Naive thymus-derived CD8-positive, alpha-beta T cell (primary cell): ENCODE measurements at regions of chr2 and their contacts with region 1.

Region 1: DNA sequence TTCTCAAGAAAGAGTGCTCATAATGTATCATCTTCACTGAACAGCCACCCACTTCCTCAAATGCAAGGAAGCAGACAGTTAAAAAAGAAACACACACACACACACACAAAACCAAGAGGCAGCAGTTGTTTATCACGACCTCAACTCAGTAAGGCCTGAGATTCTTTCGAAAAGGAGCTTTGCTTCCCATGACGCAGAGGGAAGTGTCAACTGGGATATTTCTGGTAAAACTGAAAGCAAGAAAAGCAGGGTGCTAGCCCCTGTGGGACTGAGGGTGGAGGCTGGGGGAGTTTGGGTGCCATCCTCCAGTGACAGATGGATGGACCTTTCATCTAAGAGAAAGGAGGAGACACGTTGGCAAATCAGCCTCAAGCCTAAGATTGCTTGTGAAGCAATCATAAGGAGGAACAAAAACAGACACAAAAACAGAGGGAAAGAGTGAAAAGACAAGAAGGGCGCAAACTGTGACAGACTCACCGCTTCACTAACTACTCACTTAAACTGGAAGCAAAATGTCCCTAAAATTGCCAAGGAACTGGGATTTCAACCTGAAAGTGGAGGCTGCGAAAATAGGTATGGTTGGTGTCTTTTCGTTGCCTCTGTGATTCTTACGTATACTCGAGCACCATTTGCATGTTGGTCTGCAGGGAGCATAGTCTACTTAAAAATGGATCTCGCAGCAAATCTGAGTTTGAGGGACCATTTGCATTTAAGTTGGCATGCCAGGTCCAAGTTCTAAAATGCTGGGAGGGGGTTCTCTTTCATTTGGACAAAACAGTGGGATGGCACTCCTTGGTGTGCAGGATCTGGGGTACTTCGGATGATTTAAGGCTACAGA is at the start of gene ARHGAP25:
- DNase-seq: peak in 9 of 10 donors; percentile 22 to 71 (median 42)
- ATAC-seq: peak; percentile 72 to 75
- H3K4me3 Mint-ChIP-seq: no peak within 1 kb of the TSS
- H3K27ac Mint-ChIP-seq: no peak within 1 kb of the TSS
- H3K4me1 Mint-ChIP-seq: peaks cover 12 to 55% (median 38%) of the 10 kb centered on the region in 4 donors
- H3K27me3 Mint-ChIP-seq: no peaks in the 10 kb centered on the region
- polyA plus RNA-seq, gene ARHGAP25: 76.5 to 104 (median 95.4) TPM

Region 2: DNA sequence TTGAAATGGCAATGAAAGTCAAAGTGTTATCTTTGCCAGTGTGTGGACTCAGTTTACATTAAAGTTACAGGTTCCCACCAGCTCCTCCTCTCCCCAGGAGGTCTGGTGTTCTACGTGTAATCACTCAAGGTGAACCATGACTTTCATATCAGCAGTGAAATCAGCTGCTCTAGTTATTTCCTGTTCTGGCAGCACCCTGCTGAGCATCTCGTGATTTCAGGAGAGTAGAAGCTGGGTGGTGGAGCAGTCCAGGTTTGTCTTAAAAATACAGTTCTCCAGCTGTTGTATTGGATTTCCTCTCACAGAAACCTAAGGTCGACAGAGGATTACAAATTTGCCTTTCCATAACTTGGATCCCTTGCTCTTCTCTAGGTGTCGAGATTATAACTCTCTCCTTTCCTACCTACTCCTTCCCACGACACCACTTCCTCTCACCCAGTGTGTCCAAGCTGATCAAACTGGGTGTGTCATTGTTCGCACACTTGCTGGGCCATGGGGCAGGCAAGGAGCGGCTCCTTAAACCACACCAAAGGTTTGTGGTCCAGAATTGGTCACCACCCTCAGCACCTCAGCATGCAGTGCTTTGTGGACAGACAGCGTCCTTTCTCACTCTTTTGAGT is 13.3 kb before region 1 on chr2:
- POLR2A ChIA-PET with region 1: interaction called, 22 read pairs
- DNase-seq: peak in 6 of 10 donors; percentile 22 to 59 (median 37)
- ATAC-seq: peak; percentile 85
- H3K4me3 Mint-ChIP-seq: peak overlapping the region; percentile 49 to 87 (median 81)
- H3K27ac Mint-ChIP-seq: peak overlapping the region; percentile 83 to 93 (median 90)
- H3K4me1 Mint-ChIP-seq: peaks cover 33 to 88% (median 80%) of the 10 kb centered on the region in 4 donors
- H3K27me3 Mint-ChIP-seq: no peaks in the 10 kb centered on the region

Region 3: GRCh38 chr2:68774569-68775271 is 39.8 kb after region 1 on chr2:
- POLR2A ChIA-PET with region 1: interaction called, 11 read pairs
- DNase-seq: peak in 9 of 10 donors; percentile 33 to 71 (median 50)
- ATAC-seq: peak; percentile 62 to 69
- H3K4me3 Mint-ChIP-seq: peak overlapping the region; percentile 86 to 94 (median 92)
- H3K27ac Mint-ChIP-seq: peak overlapping the region; percentile 95 to 100 (median 99)
- H3K4me1 Mint-ChIP-seq: peaks cover 65 to 91% (median 87%) of the 10 kb centered on the region in 4 donors
- H3K27me3 Mint-ChIP-seq: no peaks in the 10 kb centered on the region

Region 4: DNA sequence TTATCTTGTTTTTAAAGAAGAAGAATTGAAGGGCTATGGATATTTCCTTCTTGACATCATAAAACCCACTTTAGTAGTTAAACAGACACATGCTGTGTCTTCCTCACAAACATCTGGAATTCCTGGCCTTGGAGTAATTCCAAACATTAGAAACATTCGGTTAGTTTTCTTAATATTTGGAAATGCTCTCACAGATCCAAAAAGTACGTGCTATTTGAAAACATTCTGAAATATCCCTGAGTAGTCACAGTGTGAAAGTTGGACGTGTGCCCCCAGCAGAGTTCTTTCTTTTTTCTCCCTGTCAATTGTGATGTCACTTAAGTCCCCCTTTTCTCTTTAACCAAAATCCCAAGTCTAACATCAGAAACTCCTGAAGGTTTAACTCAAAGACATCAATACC is 369.4 kb after region 1 on chr2:
- POLR2A ChIA-PET with region 1: no interaction called
- DNase-seq: no peak
- ATAC-seq: no peak
- H3K4me3 Mint-ChIP-seq: no peak overlapping the region
- H3K27ac Mint-ChIP-seq: no peak overlapping the region
- H3K4me1 Mint-ChIP-seq: no peaks in the 10 kb centered on the region
- H3K27me3 Mint-ChIP-seq: peaks cover 0 to 7% (median 0%) of the 10 kb centered on the region in 5 donors